Posterior vena cava (tissue), 2 donors: ENCODE measurements at regions of chr1 and their contacts with region 1.

Region 1: GRCh38 chr1:221435504-221435904 is 306.4 kb downstream of the DUSP10 start:
- DNase-seq: no peak

Region 2: GRCh38 chr1:220879076-220879508 is 556.4 kb before region 1 on chr1 and contains the start of gene HLX:
- intact Hi-C with region 1: loop called (anchors 5 to 10 kb)
- DNase-seq: peak; percentile 97
- total RNA-seq, gene HLX: 16.2 to 22.1 TPM

Region 3: DNA sequence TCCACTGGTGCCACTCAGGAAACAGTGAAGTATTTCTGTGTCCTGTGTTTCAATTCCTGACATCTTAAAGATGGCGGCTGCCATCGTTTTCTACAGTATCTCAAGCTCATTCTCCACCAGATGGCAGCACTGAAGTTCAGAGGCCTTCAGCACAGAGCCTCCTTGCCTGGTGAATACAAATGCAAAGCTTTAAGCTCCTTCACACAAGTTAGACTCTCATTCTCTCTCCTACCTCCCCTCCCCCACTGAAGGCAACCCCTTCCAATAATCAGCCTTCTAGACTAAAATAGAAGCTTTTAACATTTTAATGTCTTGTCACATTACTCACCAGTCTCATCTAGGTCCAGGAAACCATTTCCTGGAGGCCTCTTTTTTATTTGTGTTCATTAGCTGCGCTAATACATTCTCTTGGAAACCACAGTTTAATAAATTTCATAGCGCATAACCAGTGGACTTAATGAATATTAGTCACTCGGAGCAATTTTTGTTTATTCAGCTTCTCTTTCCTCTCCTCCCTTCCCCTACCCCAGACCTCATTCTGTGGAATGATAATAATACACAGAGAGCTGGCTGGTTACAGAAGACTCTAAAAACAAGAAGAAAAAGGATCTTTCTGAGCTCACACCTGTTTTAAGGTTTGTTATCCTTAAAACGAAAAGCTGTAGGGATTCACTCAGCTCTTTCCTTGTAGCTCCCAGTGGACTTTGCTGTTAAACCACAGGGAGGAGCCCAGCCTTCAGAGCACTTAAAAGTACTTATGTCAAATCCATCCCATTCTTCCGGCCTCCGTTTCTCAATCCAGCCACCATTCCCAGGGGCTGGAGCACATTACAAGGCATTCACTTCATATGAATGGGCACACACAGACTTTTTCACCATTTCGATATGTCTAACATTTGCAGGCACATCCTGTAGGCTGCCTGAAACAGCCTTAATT is 171.4 kb before region 1 on chr1:
- intact Hi-C with region 1: loop called (anchors 5 to 10 kb)
- DNase-seq: no peak

Region 4: GRCh38 chr1:221371705-221372104 is 63.8 kb before region 1 on chr1:
- intact Hi-C with region 1: no loop called
- DNase-seq: no peak

Region 5: GRCh38 chr1:221394011-221394544 is 41.4 kb before region 1 on chr1:
- intact Hi-C with region 1: loop called in 1 of 2 experiments (anchors 5 kb)
- DNase-seq: no peak